OCI-LY7 (cell line): ENCODE measurements at regions of chr17 and their contacts with region 1.

Region 1: DNA sequence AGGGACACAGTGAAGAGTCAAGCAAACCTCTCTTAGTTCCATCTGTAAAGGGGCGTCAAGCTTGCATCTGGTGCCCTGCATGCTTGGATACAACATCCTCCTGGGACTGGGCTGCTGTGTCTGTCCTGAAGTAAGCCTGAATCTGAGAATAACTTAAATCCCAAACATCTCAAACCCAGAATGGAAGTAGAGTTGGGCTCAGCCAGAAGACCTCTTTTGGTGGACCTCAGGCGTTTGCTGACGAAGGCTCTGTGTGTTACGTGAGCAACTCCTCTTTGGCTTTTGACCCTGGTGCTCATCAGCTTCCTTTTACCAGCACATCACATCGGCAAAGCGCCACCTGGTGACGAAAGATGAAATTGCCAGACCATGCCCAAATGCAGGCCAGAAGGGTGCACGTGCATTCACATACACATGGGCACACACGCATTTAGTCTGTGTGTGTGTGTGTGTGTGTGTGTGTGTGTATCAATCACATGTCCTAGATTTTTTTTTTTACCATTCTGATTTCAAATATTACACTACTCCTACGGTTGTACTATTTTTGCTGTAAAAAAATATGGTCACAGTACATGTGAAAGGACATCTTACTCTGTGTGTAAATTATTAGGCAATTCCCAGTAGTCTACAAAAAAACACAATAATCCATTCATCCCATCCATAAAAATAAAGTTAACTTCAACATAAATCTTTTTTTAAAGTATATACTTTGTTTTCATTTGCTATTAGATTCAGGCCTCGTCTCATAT is 41.1 kb upstream of the FOXJ1 start:
- DNase-seq: peak; percentile 95
- H3K4me3 ChIP-seq: no peak overlapping the region
- H3K27ac ChIP-seq: no peak overlapping the region
- H3K4me1 ChIP-seq: peaks cover 28% of the 10 kb centered on the region
- CTCF ChIP-seq: peak; percentile 99

Region 2: DNA sequence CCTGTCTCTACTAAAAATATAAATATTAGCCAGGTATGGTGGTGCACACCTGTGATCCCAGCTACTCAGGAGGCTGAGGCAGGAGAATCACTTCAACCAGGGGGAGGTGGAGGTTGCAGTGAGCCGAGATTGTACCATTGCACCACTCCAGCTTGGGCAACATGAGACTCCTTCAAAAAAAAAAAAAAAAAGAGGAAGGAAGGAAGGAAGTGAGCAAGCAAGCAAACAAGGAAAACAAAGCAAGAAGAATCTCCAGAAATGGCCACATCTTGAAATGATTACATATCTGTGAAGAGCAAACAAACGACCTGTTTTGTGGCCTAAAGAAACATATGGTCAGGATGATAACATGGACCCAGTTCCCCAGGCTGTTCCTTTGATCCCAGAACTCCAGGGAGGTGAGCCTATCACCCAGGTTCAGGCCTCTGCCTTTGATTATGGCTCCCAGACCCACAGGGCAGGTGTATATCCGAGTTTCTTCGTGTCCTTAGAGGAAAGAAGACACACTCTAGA is 212.1 kb before region 1 on chr17:
- CTCF ChIA-PET with region 1: no interaction called
- POLR2A ChIA-PET with region 1: no interaction called
- intact Hi-C with region 1: no loop called
- DNase-seq: no peak
- H3K4me3 ChIP-seq: no peak overlapping the region
- H3K27ac ChIP-seq: no peak overlapping the region
- H3K4me1 ChIP-seq: peaks cover 4% of the 10 kb centered on the region
- CTCF ChIP-seq: no peak

Region 3: DNA sequence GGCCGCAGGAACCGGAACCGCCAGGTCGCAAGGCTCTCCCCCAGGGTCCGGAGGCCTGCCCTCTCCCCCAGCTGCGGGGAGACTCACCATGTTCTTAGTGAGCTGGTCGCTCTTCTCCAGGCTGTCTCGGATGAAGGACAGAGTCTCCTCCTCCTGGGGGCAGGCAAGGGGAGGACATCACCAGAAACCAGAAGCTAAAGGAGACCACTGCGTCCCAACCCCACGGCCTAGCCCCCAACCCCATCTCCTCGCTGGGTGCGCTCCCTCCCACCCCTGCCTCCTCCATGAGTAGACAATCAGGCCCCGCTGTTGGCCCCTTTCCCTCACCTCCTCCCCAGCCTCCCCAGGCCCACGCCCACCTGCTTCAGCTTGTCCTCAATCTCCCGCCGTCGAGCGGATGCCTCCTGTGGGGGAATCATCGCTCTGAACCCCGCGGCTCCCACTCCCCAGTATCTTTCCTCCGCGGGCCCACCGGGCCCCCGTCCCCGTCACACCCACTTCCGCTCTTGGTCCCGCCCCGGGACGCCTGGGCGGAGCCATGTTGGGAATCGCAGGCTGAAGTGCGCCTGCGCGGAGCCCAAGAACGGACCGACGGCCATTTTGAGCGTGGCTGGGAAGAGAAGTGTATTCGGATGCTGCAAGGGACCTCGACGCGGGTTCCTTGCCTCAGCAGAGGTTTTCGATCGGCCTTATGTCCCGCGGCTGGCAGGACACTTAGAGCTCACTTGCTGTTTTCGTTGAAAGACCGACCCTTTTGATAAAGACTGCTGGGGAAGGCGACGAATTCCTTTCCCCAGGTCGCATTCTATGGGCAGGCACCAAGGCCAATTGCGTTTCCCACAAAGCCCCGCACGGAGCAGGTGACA is 78.7 kb before region 1 on chr17 and contains the start of gene EXOC7:
- CTCF ChIA-PET with region 1: interaction called, 4 read pairs
- POLR2A ChIA-PET with region 1: interaction called, 12 read pairs
- intact Hi-C with region 1: no loop called
- DNase-seq: peak; percentile 99
- H3K4me3 ChIP-seq: peak within 1 kb of the TSS; percentile 79
- H3K27ac ChIP-seq: peak within 1 kb of the TSS; percentile 32
- H3K4me1 ChIP-seq: peaks cover 29% of the 10 kb centered on the region
- CTCF ChIP-seq: no peak
- total RNA-seq, gene EXOC7: 118 and 122 TPM in 2 replicates

Region 4: DNA sequence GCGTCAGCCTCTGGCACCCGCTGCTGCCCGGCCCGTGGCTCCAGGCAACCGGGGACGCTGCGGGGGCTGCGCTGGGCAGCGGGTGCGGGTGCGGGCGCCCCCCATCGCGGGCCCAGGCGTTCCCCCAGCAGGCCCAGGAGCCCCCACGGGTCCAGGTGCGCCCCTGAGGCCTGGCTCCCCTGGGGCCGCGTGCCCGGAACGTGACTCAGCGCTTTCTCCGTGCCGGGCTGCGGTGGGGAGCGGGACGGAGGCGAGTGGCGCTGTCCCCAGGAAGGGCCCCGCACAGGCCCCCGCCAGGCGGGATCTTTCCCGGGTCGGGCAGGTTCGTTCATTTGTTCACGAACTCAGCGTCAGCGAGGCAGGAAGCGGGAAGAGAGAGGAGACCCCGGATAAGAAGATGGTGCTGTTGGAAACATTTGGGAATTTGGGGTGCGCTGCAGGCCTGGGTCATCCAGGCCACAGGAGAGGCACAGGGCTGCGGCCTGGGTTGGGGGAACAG is 60.2 kb before region 1 on chr17:
- CTCF ChIA-PET with region 1: interaction called, 8 read pairs
- POLR2A ChIA-PET with region 1: interaction called, 9 read pairs
- intact Hi-C with region 1: loop called (anchors 1 kb)
- DNase-seq: no peak
- H3K4me3 ChIP-seq: peak overlapping the region; percentile 17
- H3K27ac ChIP-seq: no peak overlapping the region
- H3K4me1 ChIP-seq: peaks cover 22% of the 10 kb centered on the region
- CTCF ChIP-seq: no peak

Region 5: GRCh38 chr17:76145231-76146052 is 36.7 kb before region 1 on chr17:
- CTCF ChIA-PET with region 1: no interaction called
- POLR2A ChIA-PET with region 1: interaction called, 14 read pairs
- intact Hi-C with region 1: no loop called
- DNase-seq: peak; percentile 80
- H3K4me3 ChIP-seq: peak overlapping the region; percentile 48
- H3K27ac ChIP-seq: peak overlapping the region; percentile 70
- H3K4me1 ChIP-seq: peaks cover 66% of the 10 kb centered on the region
- CTCF ChIP-seq: no peak

Region 6: GRCh38 chr17:76278952-76279741 is 97.0 kb after region 1 on chr17:
- CTCF ChIA-PET with region 1: interaction called, 10 read pairs
- POLR2A ChIA-PET with region 1: no interaction called
- intact Hi-C with region 1: loop called (anchors 1 kb)
- DNase-seq: peak; percentile 88
- H3K4me3 ChIP-seq: no peak overlapping the region
- H3K27ac ChIP-seq: no peak overlapping the region
- H3K4me1 ChIP-seq: peaks cover 12% of the 10 kb centered on the region
- CTCF ChIP-seq: peak; percentile 100

Region 7: GRCh38 chr17:76397687-76398487 is 215.7 kb after region 1 on chr17:
- CTCF ChIA-PET with region 1: no interaction called
- POLR2A ChIA-PET with region 1: no interaction called
- intact Hi-C with region 1: no loop called
- DNase-seq: peak; percentile 88
- H3K4me3 ChIP-seq: no peak overlapping the region
- H3K27ac ChIP-seq: no peak overlapping the region
- H3K4me1 ChIP-seq: no peaks in the 10 kb centered on the region
- CTCF ChIP-seq: peak; percentile 100